GM10248 (cell line): ENCODE measurements at regions of chr18 and their contacts with region 1.

Region 1: DNA sequence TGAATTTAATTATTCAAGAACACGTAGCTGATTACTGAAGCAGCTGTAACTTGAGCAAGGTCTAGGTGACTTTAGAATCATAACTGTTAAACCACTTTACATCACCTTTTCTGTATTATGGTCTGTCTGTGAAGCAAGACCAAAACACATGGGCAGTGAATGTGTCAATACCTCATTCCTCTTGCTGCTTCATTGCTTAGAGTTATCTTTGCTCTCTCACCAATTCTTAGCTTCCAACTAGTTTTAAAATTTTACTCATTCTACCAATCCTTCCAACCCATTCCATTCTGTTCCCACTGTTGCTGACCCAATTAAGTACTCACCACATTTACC is 80.2 kb downstream of the MIB1 start:
- DNase-seq: no peak
- CTCF ChIP-seq: no peak

Region 2: GRCh38 chr18:21808185-21808584 is 12.6 kb before region 1 on chr18:
- CTCF ChIA-PET with region 1: interaction called, 11 read pairs
- POLR2A ChIA-PET with region 1: no interaction called
- DNase-seq: no peak
- CTCF ChIP-seq: no peak

Region 3: GRCh38 chr18:22166069-22166950 is 345.5 kb after region 1 on chr18:
- CTCF ChIA-PET with region 1: no interaction called
- POLR2A ChIA-PET with region 1: no interaction called
- DNase-seq: no peak
- CTCF ChIP-seq: no peak